WTC11 (cell line): ENCODE measurements at regions of chr16 and their contacts with region 1.

Region 1: DNA sequence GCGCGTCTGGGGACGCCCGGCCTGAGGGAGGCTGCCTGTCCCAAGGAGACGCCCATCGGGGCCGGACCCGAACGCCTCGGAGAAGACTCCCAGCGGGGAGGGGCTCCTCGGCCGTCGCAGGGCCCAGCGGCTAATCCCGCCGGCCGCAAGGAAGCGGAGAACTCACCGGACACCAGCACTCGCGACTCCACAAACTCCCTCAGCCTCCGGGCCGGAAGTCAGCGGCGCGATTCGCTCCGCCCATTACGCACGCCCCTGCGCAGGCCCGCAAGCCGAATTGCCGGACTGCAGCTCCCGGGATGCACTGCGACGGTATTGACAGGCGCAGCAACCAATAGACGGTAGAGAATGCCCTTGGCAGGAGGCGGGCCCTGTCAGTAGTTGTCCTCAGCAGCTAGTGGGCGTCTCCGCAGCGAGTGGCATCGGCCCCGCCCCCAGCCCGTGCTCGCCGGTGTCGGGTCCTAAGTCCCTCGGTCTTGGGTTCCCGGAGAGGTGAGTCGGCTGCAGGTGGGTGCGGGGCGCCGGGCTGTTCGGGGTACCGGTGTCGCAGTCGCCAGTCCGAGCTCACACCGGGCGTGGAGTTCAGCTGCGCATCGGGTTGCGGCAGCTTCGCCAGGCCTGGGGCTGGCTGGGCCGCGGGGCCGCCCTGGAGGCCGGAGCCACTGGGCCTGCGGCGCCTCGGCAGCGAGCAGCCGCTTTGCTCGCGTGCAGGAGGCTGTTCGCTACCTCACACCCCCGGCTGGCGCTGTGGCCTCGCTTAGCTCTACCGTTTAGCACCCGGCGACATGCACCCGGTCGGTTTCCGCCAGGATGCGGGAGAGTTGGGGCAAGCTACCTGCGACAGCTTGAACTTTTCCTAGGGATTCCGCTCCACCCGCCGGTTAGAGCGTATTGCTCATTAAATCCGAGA is at the starts of genes ZNF174 and ZSCAN32:
- DNase-seq: peak; percentile 99
- ATAC-seq: peak; percentile 99
- H3K4me3 Mint-ChIP-seq: peak within 1 kb of the TSS; percentile 95
- H3K27ac Mint-ChIP-seq: peak within 1 kb of the TSS; percentile 78; the same call in 1 of the 2 replicates
- H3K4me1 Mint-ChIP-seq: peaks cover 8% of the 10 kb centered on the region
- H3K27me3 Mint-ChIP-seq: no peaks in the 10 kb centered on the region
- CTCF ChIP-seq: no peak
- total RNA-seq, gene ZNF174: 11.3 to 13.8 TPM (median 11.7 TPM) in 3 replicates
- total RNA-seq, gene ZSCAN32: 16.0 to 17.9 TPM (median 16.7 TPM) in 3 replicates

Region 2: GRCh38 chr16:3266873-3267537 is 134.0 kb before region 1 on chr16:
- CTCF ChIA-PET with region 1: interaction called, 11 read pairs
- POLR2A ChIA-PET with region 1: no interaction called
- DNase-seq: no peak
- ATAC-seq: peak; percentile 12; the same call in 1 of the 2 replicates
- H3K4me3 Mint-ChIP-seq: no peak overlapping the region
- H3K27ac Mint-ChIP-seq: no peak overlapping the region
- H3K4me1 Mint-ChIP-seq: peaks cover 6% of the 10 kb centered on the region; the same call in 1 of the 2 replicates
- H3K27me3 Mint-ChIP-seq: peaks cover 48% of the 10 kb centered on the region
- CTCF ChIP-seq: peak; percentile 56; the same call in 1 of the 2 replicates

Region 3: DNA sequence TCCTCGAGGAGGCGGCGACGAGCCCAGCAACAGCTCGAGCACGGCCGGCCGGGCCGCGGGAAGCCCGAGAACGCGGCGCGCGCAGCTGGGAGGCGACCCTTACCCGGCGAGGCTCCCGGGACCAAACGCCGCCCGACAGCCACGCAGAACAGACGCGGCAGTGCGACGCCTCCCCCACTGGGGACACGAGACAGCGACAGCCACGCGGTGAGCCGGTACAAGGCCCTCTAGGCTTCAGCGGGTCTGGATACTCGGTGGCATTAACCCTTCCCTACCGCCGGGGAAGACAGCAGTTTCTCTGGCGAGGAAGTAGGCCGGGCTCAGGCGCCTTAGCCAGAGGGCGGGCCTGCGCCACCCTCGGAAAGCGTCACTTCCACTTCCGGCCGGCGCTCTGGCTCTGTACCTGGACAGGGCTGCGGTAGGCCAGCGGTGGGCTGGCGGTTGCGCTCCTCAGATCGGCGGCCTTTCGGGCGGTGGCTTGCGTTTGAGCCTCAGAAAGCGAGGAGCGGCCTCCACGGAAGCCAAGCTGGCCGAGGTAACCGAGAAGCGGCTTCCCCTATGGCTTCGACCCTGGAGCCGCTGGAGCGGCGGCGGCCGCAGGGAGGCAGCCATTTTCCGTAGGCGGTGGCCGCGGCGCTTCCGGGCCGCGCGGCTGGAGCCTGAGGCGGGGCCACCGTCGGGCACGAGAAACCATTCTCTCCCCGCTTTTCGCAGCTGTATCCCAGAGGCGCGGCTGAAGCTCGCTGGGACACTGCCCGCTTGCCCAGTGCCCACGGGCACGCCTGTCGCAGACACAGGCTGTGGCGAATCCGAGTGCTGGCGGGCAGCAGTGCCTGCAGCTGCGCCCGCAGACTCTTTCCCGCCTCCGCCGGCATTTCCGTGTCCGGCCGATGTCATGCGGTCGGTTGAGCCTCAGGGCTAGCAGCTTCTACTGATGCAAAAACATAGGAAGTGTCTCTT is 95.6 kb before region 1 on chr16 and contains the starts of genes TIGD7 and ZNF75A:
- CTCF ChIA-PET with region 1: no interaction called
- POLR2A ChIA-PET with region 1: interaction called, 11 read pairs
- DNase-seq: peak; percentile 84
- ATAC-seq: peak; percentile 98
- H3K4me3 Mint-ChIP-seq: peak within 1 kb of the TSS; percentile 77
- H3K27ac Mint-ChIP-seq: no peak within 1 kb of the TSS; the same call in 1 of the 2 replicates
- H3K4me1 Mint-ChIP-seq: peaks cover 8% of the 10 kb centered on the region
- H3K27me3 Mint-ChIP-seq: peaks cover 25% of the 10 kb centered on the region
- CTCF ChIP-seq: no peak
- total RNA-seq, gene TIGD7: 5.3 to 7.4 TPM (median 7.0 TPM) in 3 replicates
- total RNA-seq, gene ZNF75A: 21.8 to 31.5 TPM (median 23.5 TPM) in 3 replicates

Region 4: GRCh38 chr16:3443108-3444031 is 42.3 kb after region 1 on chr16 and contains the starts of genes NAA60 and ZNF597:
- CTCF ChIA-PET with region 1: interaction called, 13 read pairs
- POLR2A ChIA-PET with region 1: interaction called, 10 read pairs
- DNase-seq: peak; percentile 76
- ATAC-seq: peak; percentile 95
- H3K4me3 Mint-ChIP-seq: peak within 1 kb of the TSS; percentile 97
- H3K27ac Mint-ChIP-seq: peak within 1 kb of the TSS; percentile 89
- H3K4me1 Mint-ChIP-seq: 0 out of 2 replicates have a peak, but pooled peaks cover 6% of the 10 kb centered on the region
- H3K27me3 Mint-ChIP-seq: no peaks in the 10 kb centered on the region; the same call in 1 of the 2 replicates
- CTCF ChIP-seq: no peak
- total RNA-seq, gene NAA60: 44.8 to 50.3 TPM (median 46.4 TPM) in 3 replicates
- total RNA-seq, gene ZNF597: 1.3 to 2.2 TPM (median 1.4 TPM) in 3 replicates

Region 5: GRCh38 chr16:3503523-3503922 is 102.5 kb after region 1 on chr16:
- CTCF ChIA-PET with region 1: interaction called, 10 read pairs
- POLR2A ChIA-PET with region 1: interaction called, 3 read pairs
- DNase-seq: no peak
- ATAC-seq: no peak
- H3K4me3 Mint-ChIP-seq: no peak overlapping the region
- H3K27ac Mint-ChIP-seq: no peak overlapping the region
- H3K4me1 Mint-ChIP-seq: peaks cover 17% of the 10 kb centered on the region
- H3K27me3 Mint-ChIP-seq: 0 out of 2 replicates have a peak, but pooled peaks cover 2% of the 10 kb centered on the region
- CTCF ChIP-seq: no peak